ENCODE measurements at regions of chr15 and their contacts with region 1.

Region 1: DNA sequence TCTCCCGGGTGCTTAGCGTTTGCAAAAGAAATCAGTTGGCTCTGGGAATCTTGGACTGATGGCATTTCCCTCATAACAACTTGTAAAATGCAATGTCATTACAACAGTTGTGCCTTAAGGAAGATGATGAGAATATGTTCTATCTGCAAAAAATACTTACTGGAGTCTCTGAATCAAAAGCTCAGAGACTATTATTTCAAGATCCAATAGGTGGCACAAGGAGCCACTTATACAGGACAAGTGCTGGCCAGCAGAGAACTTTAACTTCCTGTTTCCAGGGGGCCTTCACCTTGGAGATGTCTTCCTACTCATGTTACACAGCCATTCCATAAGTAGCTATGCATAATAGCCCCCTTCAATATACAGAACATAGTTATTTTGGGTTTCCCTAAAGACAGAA is 8.9 kb upstream of the RPS27L start:
- H3K4me3 Mint-ChIP-seq: no peak overlapping the region
- H3K27ac Mint-ChIP-seq: no peak overlapping the region
- H3K4me1 Mint-ChIP-seq: no peaks in the 10 kb centered on the region
- H3K27me3 Mint-ChIP-seq: no peaks in the 10 kb centered on the region

Region 2: GRCh38 chr15:63402498-63403253 is 236.5 kb after region 1 on chr15:
- intact Hi-C with region 1: loop called (anchors 5 kb)
- H3K4me3 Mint-ChIP-seq: no peak overlapping the region
- H3K27ac Mint-ChIP-seq: no peak overlapping the region
- H3K4me1 Mint-ChIP-seq: peaks cover 29% of the 10 kb centered on the region
- H3K27me3 Mint-ChIP-seq: no peaks in the 10 kb centered on the region

Measured in dendritic cell treated with granulocyte-macrophage colony-stimulating factor and Interleukin-4, amounts not matched to agents 40 ng/mL and 50 ng/mL, for 4 days (primary cell).